ENCODE measurements at regions of chr10 and their contacts with region 1.

Region 1: DNA sequence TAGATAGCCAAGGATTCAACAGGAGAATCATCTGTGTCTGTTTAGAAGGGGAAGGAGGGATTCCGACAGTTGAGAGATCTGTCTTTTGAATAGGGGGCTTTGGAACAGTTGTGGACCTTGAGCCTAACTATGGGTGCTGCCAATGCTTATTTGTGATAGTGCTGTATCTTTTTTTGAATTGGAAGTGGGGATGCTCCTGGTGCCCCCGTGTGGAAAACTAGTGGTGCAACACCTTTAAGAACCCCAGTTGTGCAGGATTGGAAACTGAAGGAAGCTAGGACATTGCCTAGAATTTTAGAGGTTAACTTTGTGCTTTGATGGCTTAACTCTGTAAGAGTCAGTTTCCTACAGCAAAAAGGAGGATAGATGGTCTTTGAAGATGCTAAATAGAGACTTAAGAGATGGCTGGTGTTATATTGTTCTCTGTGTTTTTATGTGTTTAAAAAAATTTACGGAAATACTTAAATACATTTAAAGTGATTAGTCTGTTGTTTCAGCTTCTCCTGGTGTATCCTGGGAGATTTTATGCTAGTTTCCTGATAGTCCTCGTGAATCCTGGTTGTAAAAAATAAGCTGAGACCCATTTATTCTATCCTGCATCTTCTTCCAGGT is 69.3 kb downstream of the AP3M1 start:
- DNase-seq: peak; percentile 63
- ATAC-seq: peak; percentile 37
- H3K4me3 Mint-ChIP-seq: no peak overlapping the region
- H3K27ac Mint-ChIP-seq: no peak overlapping the region
- H3K4me1 Mint-ChIP-seq: peaks cover 41% of the 10 kb centered on the region
- H3K27me3 Mint-ChIP-seq: no peaks in the 10 kb centered on the region

Region 2: DNA sequence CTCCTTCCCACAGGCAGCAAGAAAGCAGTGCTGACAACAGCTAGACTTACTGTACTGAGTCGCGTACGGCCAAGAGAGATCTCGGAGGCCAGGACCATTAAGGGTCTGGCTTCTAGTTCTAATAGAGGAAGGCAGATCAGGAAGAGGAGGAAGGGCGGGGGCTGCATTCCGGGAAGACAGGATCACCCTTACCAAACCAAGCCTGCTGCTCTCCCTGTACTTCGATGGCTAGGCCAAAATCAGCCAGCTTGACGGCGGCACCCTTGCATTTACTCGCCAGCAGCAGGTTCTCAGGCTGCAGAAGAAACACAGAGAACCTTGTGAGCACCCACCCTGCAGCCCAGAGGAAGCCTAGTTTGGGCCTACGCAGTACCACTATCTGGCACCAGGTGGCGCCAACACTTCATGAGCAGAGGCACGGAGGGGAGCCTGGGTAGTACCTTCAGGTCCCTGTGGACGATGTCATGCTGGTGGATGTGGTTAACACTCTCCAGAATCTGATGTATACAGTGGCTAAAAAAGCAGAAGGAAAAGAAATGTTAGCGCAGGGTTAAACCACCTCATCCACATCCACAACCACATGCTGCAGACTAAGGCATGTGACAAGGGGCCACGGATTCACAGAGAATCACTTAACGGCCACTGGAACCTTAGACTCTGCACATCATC is 232.3 kb before region 1 on chr10:
- CTCF ChIA-PET with region 1: interaction called, 7 read pairs
- POLR2A ChIA-PET with region 1: no interaction called
- intact Hi-C with region 1: loop called (anchors 1 kb)
- DNase-seq: peak; percentile 95
- ATAC-seq: peak; percentile 99
- H3K4me3 Mint-ChIP-seq: no peak overlapping the region
- H3K27ac Mint-ChIP-seq: peak overlapping the region; percentile 85
- H3K4me1 Mint-ChIP-seq: peaks cover 7% of the 10 kb centered on the region
- H3K27me3 Mint-ChIP-seq: no peaks in the 10 kb centered on the region

Region 3: GRCh38 chr10:73886085-73886529 is 195.2 kb before region 1 on chr10:
- CTCF ChIA-PET with region 1: interaction called, 58 read pairs
- POLR2A ChIA-PET with region 1: no interaction called
- intact Hi-C with region 1: loop called (anchors 1 kb)
- DNase-seq: peak; percentile 82
- ATAC-seq: peak; percentile 92
- H3K4me3 Mint-ChIP-seq: no peak overlapping the region
- H3K27ac Mint-ChIP-seq: no peak overlapping the region
- H3K4me1 Mint-ChIP-seq: peaks cover 9% of the 10 kb centered on the region
- H3K27me3 Mint-ChIP-seq: no peaks in the 10 kb centered on the region

Region 4: GRCh38 chr10:73956476-73957359 is 124.6 kb before region 1 on chr10:
- CTCF ChIA-PET with region 1: interaction called, 23 read pairs
- POLR2A ChIA-PET with region 1: interaction called, 4 read pairs
- intact Hi-C with region 1: loop called (anchors 2 kb)
- DNase-seq: peak; percentile 44
- ATAC-seq: peak; percentile 66
- H3K4me3 Mint-ChIP-seq: peak overlapping the region; percentile 35
- H3K27ac Mint-ChIP-seq: peak overlapping the region; percentile 87
- H3K4me1 Mint-ChIP-seq: peaks cover 58% of the 10 kb centered on the region
- H3K27me3 Mint-ChIP-seq: no peaks in the 10 kb centered on the region

Region 5: GRCh38 chr10:74058658-74059057 is 22.6 kb before region 1 on chr10:
- CTCF ChIA-PET with region 1: interaction called, 6 read pairs
- POLR2A ChIA-PET with region 1: interaction called, 4 read pairs
- intact Hi-C with region 1: loop called (anchors 2 kb)
- DNase-seq: peak; percentile 58
- ATAC-seq: peak; percentile 43
- H3K4me3 Mint-ChIP-seq: no peak overlapping the region
- H3K27ac Mint-ChIP-seq: no peak overlapping the region
- H3K4me1 Mint-ChIP-seq: peaks cover 31% of the 10 kb centered on the region
- H3K27me3 Mint-ChIP-seq: no peaks in the 10 kb centered on the region

Region 6: GRCh38 chr10:74092372-74092771 is 11.1 kb after region 1 on chr10:
- CTCF ChIA-PET with region 1: interaction called, 19 read pairs
- POLR2A ChIA-PET with region 1: no interaction called
- intact Hi-C with region 1: no loop called
- DNase-seq: no peak
- ATAC-seq: no peak
- H3K4me3 Mint-ChIP-seq: no peak overlapping the region
- H3K27ac Mint-ChIP-seq: no peak overlapping the region
- H3K4me1 Mint-ChIP-seq: no peaks in the 10 kb centered on the region
- H3K27me3 Mint-ChIP-seq: no peaks in the 10 kb centered on the region